Left ventricle myocardium inferior (tissue), 1 donor: ENCODE measurements at regions of chr5 and their contacts with region 1.

Region 1: GRCh38 chr5:42767491-42768105 is 11.0 kb downstream of the CCDC152 start:
- DNase-seq: no peak
- H3K4me3 ChIP-seq: no peak overlapping the region
- H3K27ac ChIP-seq: no peak overlapping the region
- H3K4me1 ChIP-seq: peaks cover 5% of the 10 kb centered on the region
- H3K27me3 ChIP-seq: no peaks in the 10 kb centered on the region
- CTCF ChIP-seq: peak; percentile 74

Region 2: DNA sequence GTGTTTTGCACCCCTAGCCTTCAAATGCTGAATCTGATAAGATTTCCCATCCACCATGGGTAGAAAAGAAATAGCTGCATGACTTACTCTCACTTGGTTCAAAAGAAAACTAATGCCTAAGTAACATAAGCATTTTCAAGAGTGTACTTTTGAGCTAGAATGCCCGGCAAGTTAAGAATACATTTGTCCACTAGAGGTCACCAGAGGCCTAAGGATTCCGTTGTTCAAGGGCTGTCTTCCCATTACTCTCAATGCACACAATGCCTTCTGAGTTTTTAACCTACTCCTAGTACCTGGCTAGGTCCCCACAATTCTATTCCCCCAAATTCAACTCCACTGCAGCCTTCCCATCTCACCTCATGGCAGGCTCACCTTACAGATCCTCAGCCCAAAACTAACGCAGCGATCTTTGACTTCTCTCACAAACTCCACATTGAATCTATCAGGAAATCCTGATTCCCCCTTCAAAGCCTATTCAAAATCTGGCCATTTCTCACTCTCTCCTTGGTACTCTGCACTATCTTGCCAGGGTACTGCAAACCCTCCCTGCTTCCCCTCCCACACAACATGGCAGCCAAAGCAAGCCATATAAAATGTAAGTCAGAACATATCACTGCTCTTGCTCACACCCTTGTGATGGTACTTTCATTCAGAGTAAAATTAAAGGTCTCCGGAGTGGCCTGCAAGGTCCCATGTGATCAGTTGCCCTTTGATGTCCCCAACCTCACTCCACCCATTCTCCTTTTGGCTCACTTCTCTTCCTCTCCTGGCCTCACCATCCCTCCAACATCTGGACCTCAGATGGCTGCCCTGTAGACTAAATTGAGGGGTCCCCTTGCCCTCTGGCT is 910.7 kb before region 1 on chr5:
- intact Hi-C with region 1: loop called (anchors 5 kb)
- DNase-seq: no peak
- H3K4me3 ChIP-seq: no peak overlapping the region
- H3K27ac ChIP-seq: peak overlapping the region; percentile 6
- H3K4me1 ChIP-seq: peaks cover 5% of the 10 kb centered on the region
- H3K27me3 ChIP-seq: no peaks in the 10 kb centered on the region
- CTCF ChIP-seq: peak; percentile 87

Region 3: DNA sequence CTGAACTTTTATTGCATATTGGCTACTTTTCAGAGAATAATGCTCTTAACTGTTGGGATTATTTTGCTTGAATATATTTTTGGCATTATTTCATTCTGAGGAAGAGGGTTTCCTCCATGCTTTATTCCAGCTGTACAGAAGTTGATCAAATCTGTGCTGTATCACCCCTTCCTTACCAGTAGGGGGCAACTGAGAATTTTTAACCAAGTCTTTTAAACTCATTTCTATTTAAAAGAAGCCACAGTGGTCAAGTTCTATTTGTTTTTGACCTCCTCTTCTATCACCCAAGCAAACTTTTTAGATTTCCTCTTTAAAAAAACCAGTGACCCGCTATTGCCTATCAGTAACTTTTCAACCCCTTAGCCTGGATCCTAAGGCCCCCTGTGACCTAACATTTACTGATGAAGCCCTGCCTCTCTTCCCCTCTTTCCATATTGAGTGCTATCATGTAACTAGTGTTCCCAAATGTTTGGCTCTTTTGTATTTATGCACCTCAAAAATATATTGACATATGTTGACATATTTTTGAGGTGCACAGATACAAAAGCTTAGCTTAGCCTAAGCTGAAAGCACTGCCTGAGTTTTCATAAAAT is 761.9 kb before region 1 on chr5:
- intact Hi-C with region 1: loop called (anchors 10 kb)
- DNase-seq: no peak
- H3K4me3 ChIP-seq: no peak overlapping the region
- H3K27ac ChIP-seq: no peak overlapping the region
- H3K4me1 ChIP-seq: no peaks in the 10 kb centered on the region
- H3K27me3 ChIP-seq: no peaks in the 10 kb centered on the region
- CTCF ChIP-seq: peak; percentile 75